ENCODE measurements at regions of chr7 and their contacts with region 1.

Region 1: DNA sequence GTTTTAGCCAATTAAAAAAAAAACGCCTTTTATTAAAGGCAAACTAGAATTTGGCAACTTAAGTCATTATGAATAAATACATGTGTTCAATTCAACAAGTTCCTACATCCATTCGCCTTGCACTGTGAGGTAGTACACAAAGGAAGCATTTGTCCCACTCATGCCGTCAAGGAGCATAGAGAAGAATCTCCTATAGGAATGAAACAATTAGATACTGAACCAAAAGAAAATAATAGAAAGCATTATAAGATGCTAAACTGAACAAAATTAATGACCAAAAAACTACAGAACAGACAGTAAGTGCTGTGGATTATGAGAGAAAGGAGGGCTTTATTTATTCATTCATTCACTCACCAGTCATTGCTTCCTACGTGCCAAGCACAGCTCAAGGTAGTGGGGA is 42.2 kb downstream of the SNX13 start:
- DNase-seq: no peak
- ATAC-seq: no peak
- H3K4me3 ChIP-seq: no peak overlapping the region
- H3K4me3 Mint-ChIP-seq: no peak overlapping the region
- H3K27ac ChIP-seq: no peak overlapping the region
- H3K27ac Mint-ChIP-seq: no peak overlapping the region
- H3K4me1 ChIP-seq: no peaks in the 10 kb centered on the region
- H3K4me1 Mint-ChIP-seq: peaks cover 2% of the 10 kb centered on the region
- H3K27me3 ChIP-seq: no peaks in the 10 kb centered on the region
- H3K27me3 Mint-ChIP-seq: no peaks in the 10 kb centered on the region
- CTCF ChIP-seq: no peak

Region 2: GRCh38 chr7:17878627-17879026 is 19.5 kb before region 1 on chr7:
- CTCF ChIA-PET with region 1: interaction called, 4 read pairs
- POLR2A ChIA-PET with region 1: no interaction called
- intact Hi-C with region 1: loop called (anchors 2 kb)
- DNase-seq: no peak
- ATAC-seq: no peak
- H3K4me3 ChIP-seq: no peak overlapping the region
- H3K4me3 Mint-ChIP-seq: no peak overlapping the region
- H3K27ac ChIP-seq: no peak overlapping the region
- H3K27ac Mint-ChIP-seq: no peak overlapping the region
- H3K4me1 ChIP-seq: no peaks in the 10 kb centered on the region
- H3K4me1 Mint-ChIP-seq: no peaks in the 10 kb centered on the region
- H3K27me3 ChIP-seq: no peaks in the 10 kb centered on the region
- H3K27me3 Mint-ChIP-seq: no peaks in the 10 kb centered on the region
- CTCF ChIP-seq: no peak

Region 3: GRCh38 chr7:17940302-17940883 is 42.3 kb after region 1 on chr7 and contains the start of gene SNX13:
- CTCF ChIA-PET with region 1: no interaction called
- POLR2A ChIA-PET with region 1: no interaction called
- intact Hi-C with region 1: no loop called
- DNase-seq: peak; percentile 95
- ATAC-seq: peak; percentile 90
- H3K4me3 ChIP-seq: peak within 1 kb of the TSS; percentile 81 to 96 (median 95)
- H3K4me3 Mint-ChIP-seq: peak within 1 kb of the TSS; percentile 98
- H3K27ac ChIP-seq: peak within 1 kb of the TSS; percentile 97
- H3K27ac Mint-ChIP-seq: peak within 1 kb of the TSS; percentile 99
- H3K4me1 ChIP-seq: peaks cover 14 to 22% of the 10 kb centered on the region in 2 donors
- H3K4me1 Mint-ChIP-seq: peaks cover 38% of the 10 kb centered on the region
- H3K27me3 ChIP-seq: no peaks in the 10 kb centered on the region
- H3K27me3 Mint-ChIP-seq: no peaks in the 10 kb centered on the region
- CTCF ChIP-seq: no peak
- total RNA-seq, gene SNX13: 58.1 and 62.6 TPM in 2 replicates

Measured in B cell (primary cell).